AG04450 (cell line): ENCODE measurements at regions of chr4 and their contacts with region 1.

Region 1: GRCh38 chr4:73446336-73446938 is 10.4 kb downstream of the AFP start:
- DNase-seq: no peak
- H3K4me3 ChIP-seq: no peak overlapping the region
- H3K27ac ChIP-seq: no peak overlapping the region
- H3K27me3 ChIP-seq: no peaks in the 10 kb centered on the region
- CTCF ChIP-seq: peak; percentile 77

Region 2: GRCh38 chr4:72919937-72920336 is 526.5 kb before region 1 on chr4:
- CTCF ChIA-PET with region 1: no interaction called
- POLR2A ChIA-PET with region 1: no interaction called
- DNase-seq: no peak
- H3K4me3 ChIP-seq: no peak overlapping the region
- H3K27ac ChIP-seq: no peak overlapping the region
- H3K27me3 ChIP-seq: no peaks in the 10 kb centered on the region
- CTCF ChIP-seq: no peak

Region 3: GRCh38 chr4:73170507-73171167 is 275.8 kb before region 1 on chr4:
- CTCF ChIA-PET with region 1: no interaction called
- POLR2A ChIA-PET with region 1: no interaction called
- DNase-seq: no peak
- H3K4me3 ChIP-seq: no peak overlapping the region
- H3K27ac ChIP-seq: no peak overlapping the region
- H3K27me3 ChIP-seq: no peaks in the 10 kb centered on the region
- CTCF ChIP-seq: no peak

Region 4: GRCh38 chr4:73308286-73308685 is 138.2 kb before region 1 on chr4:
- CTCF ChIA-PET with region 1: interaction called, 40 read pairs
- POLR2A ChIA-PET with region 1: no interaction called
- DNase-seq: peak; percentile 20
- H3K4me3 ChIP-seq: no peak overlapping the region
- H3K27ac ChIP-seq: no peak overlapping the region
- H3K27me3 ChIP-seq: no peaks in the 10 kb centered on the region
- CTCF ChIP-seq: peak; percentile 67

Region 5: GRCh38 chr4:73341454-73341853 is 105.0 kb before region 1 on chr4:
- CTCF ChIA-PET with region 1: interaction called, 22 read pairs
- POLR2A ChIA-PET with region 1: no interaction called
- DNase-seq: peak; percentile 4
- H3K4me3 ChIP-seq: no peak overlapping the region
- H3K27ac ChIP-seq: no peak overlapping the region
- H3K27me3 ChIP-seq: no peaks in the 10 kb centered on the region
- CTCF ChIP-seq: peak; percentile 61

Region 6: GRCh38 chr4:73434311-73434710 is 12.1 kb before region 1 on chr4:
- CTCF ChIA-PET with region 1: interaction called, 26 read pairs
- POLR2A ChIA-PET with region 1: interaction called, 16 read pairs
- DNase-seq: no peak
- H3K4me3 ChIP-seq: no peak overlapping the region
- H3K27ac ChIP-seq: no peak overlapping the region
- H3K27me3 ChIP-seq: peaks cover 5% of the 10 kb centered on the region
- CTCF ChIP-seq: peak; percentile 55